ENCODE measurements at regions of chr14 and their contacts with region 1.

Region 1: GRCh38 chr14:69191340-69192111 is at the start of gene EXD2:
- DNase-seq: peak; percentile 86 to 87
- ATAC-seq: peak; percentile 98 to 99
- H3K4me3 ChIP-seq: peak within 1 kb of the TSS; percentile 63 to 99 (median 90)
- H3K27ac ChIP-seq: peak within 1 kb of the TSS; percentile 79 to 89 (median 84)
- H3K4me1 ChIP-seq: peaks cover 16 to 18% of the 10 kb centered on the region in 2 donors
- H3K27me3 ChIP-seq: no peaks in the 10 kb centered on the region
- CTCF ChIP-seq: no peak
- POLR2A ChIP-seq: peak in 1 of 2 donors; percentile 55
- total RNA-seq, gene EXD2: 13.7 to 19.7 (median 16.5) TPM

Region 2: GRCh38 chr14:69129264-69129880 is 62.2 kb before region 1 on chr14:
- in situ Hi-C with region 1: no loop called
- intact Hi-C with region 1: loop called (anchors 2 kb)
- DNase-seq: peak; percentile 57 to 67
- ATAC-seq: peak; percentile 81 to 86
- H3K4me3 ChIP-seq: no peak overlapping the region
- H3K27ac ChIP-seq: peak overlapping the region; percentile 58 to 79 (median 61)
- H3K4me1 ChIP-seq: peaks cover 63 to 69% of the 10 kb centered on the region in 2 donors
- H3K27me3 ChIP-seq: no peaks in the 10 kb centered on the region
- CTCF ChIP-seq: peak; percentile 79 to 93 (median 87)
- POLR2A ChIP-seq: no peak

Region 3: GRCh38 chr14:69214393-69214792 is 22.9 kb after region 1 on chr14:
- in situ Hi-C with region 1: no loop called
- intact Hi-C with region 1: loop called (anchors 2 kb)
- DNase-seq: peak; percentile 10 to 41
- ATAC-seq: peak; percentile 100
- H3K4me3 ChIP-seq: no peak overlapping the region
- H3K27ac ChIP-seq: peak overlapping the region; percentile 67 to 83 (median 72)
- H3K4me1 ChIP-seq: peaks cover 15 to 25% of the 10 kb centered on the region in 2 donors
- H3K27me3 ChIP-seq: no peaks in the 10 kb centered on the region
- CTCF ChIP-seq: no peak
- POLR2A ChIP-seq: no peak

Region 4: DNA sequence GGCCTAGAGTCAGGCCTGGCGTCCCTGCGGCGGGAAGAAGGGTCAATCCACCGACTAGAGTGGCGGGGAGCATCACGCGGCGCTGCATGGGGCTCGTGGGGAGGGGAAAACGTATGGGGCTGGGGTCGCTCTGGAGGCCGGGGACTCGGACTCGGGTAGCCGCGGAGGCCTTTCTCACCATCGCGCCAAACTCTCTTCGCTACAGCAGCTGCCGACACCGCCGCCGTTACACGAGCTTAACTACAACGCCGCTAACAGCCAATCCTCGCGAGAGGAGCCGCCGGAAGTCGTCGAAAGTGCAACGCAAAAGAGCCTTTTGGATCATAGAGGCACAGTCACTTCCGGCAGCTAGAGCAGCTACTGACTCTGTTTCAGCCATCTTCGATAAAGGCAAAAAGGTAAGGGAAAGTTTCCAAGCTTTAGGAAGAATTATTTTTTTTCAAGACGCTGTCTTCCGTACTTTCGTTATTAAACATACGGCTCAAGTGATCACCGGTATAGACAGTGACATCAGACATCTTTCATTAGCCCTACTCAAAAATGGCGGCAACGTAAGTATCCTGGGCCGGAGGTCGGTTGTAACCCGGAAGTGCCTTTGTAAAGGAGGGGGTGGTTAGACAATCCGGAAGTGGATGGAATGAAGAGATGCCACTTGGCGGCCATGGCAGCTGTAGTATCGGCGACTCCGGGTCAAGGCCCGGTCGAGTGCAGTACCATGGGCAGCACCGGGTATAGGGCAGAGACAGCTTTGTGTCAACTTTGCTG is 206.7 kb after region 1 on chr14 and contains the starts of genes ERH and SLC39A9:
- in situ Hi-C with region 1: no loop called
- intact Hi-C with region 1: loop called (anchors 2 kb)
- DNase-seq: peak; percentile 94 to 96
- ATAC-seq: peak; percentile 99
- H3K4me3 ChIP-seq: peak within 1 kb of the TSS; percentile 82 to 91 (median 84)
- H3K27ac ChIP-seq: peak within 1 kb of the TSS; percentile 89 to 94 (median 91)
- H3K4me1 ChIP-seq: peaks cover 37 to 42% of the 10 kb centered on the region in 2 donors
- H3K27me3 ChIP-seq: no peaks in the 10 kb centered on the region
- CTCF ChIP-seq: no peak
- POLR2A ChIP-seq: peak; percentile 59 to 71
- total RNA-seq, gene ERH: 46.7 to 49.2 (median 48.1) TPM
- total RNA-seq, gene SLC39A9: 20.6 to 23.2 (median 21.8) TPM

Measured in gastrocnemius medialis (tissue), 4 donors.